ENCODE measurements at regions of chr10 and their contacts with region 1.

Region 1: GRCh38 chr10:99008054-99008453 is 227.6 kb downstream of the HPSE2 start:
- DNase-seq: no peak
- H3K27ac ChIP-seq: no peak overlapping the region
- CTCF ChIP-seq: no peak

Region 2: DNA sequence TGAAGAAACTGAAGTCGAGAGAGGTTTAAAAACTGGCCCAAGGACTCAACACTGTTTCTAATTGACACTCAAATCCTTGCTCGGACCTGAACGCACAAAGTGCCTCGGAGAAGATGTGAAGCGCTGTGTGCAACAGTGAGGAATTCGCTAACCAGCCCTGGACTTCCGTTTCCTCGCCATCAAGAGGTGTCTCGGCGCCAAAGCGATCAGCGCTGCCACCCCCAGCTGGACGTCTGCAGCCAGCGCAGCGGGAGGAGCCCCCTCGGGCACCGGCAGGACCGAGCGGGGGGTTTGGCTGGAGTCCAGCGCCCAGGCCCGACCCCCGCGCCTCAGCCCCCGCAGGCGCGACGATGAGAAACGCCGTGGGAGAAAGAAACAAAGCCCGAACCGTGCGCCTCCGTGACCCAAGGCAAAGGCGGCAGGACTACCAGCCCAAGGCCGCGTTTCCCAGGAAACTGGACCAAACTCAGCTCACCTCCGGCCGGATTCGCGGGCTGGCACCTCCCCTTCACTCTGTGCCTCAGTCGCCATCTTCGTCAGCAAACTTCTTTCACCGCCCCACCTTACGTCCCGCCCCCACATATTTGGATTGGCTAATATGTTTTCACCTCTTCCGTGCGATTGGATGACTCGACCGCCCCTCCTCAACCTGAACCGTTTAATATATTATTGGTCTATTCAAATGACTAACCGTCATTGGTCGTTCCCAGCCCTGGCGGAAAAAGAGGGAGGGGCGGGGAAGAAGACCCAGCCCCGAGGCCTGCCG is 1715.8 kb before region 1 on chr10 and contains the start of gene ARHGAP19:
- CTCF ChIA-PET with region 1: interaction called, 10 read pairs
- POLR2A ChIA-PET with region 1: no interaction called
- DNase-seq: peak; percentile 100
- H3K27ac ChIP-seq: peak within 1 kb of the TSS; percentile 99
- CTCF ChIP-seq: peak; percentile 47; the same call in 1 of the 2 replicates

Measured in RWPE1 (cell line).